ENCODE measurements at regions of chr20 and their contacts with region 1.

Region 1: GRCh38 chr20:5950271-5951031 is at the starts of genes MCM8 and TRMT6:
- DNase-seq: peak; percentile 98
- ATAC-seq: peak; percentile 87
- H3K4me3 Mint-ChIP-seq: peak within 1 kb of the TSS; percentile 95
- H3K27ac Mint-ChIP-seq: peak within 1 kb of the TSS; percentile 96
- H3K4me1 Mint-ChIP-seq: peaks cover 49% of the 10 kb centered on the region
- H3K27me3 Mint-ChIP-seq: no peaks in the 10 kb centered on the region
- total RNA-seq, gene MCM8: 42.5 to 45.4 TPM
- total RNA-seq, gene TRMT6: 20.9 to 27.3 TPM

Region 2: DNA sequence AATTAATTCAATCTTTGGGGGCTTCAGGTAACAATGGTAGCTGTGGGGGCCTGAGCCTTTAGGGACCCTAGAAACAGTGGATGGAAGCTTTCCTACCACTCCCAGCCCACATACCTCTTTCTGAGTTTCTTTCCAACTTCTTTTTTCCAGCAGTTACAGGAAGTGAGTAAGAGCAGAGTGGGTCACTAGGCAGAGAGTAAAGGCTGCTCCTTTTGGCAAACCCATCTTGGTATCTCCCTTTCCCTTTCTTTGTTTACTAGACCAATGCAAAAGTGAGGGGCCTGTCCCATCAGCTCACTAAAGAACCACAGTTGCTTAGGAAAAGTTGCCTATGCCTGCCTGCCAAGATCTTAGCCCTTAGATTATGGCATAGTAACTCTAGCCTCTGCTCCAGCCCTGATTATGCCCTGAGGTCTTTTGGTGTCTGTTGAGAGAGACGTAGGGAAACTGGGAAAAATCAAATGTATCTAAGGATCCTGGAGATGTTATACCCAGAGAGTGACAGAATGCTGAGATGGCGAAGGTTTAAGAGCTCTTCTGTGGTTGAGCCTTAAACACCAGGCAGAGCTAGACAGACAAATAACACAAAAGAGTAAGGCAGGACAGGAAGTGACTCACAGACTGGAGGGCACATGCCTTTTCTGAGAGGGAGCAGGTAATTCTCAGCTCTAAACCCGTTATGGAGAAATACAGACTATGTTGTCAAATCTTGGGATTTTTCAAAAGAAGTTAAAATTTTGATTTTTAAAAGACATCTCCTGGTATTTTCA is 31.4 kb before region 1 on chr20:
- CTCF ChIA-PET with region 1: interaction called, 4 read pairs
- POLR2A ChIA-PET with region 1: interaction called, 7 read pairs
- intact Hi-C with region 1: loop called in 1 of 2 experiments (anchors 1 kb)
- DNase-seq: peak; percentile 12
- ATAC-seq: peak; percentile 89
- H3K4me3 Mint-ChIP-seq: no peak overlapping the region
- H3K27ac Mint-ChIP-seq: peak overlapping the region; percentile 4
- H3K4me1 Mint-ChIP-seq: peaks cover 19% of the 10 kb centered on the region
- H3K27me3 Mint-ChIP-seq: peaks cover 8% of the 10 kb centered on the region

Region 3: GRCh38 chr20:6074145-6074561 is 123.7 kb after region 1 on chr20:
- CTCF ChIA-PET with region 1: no interaction called
- POLR2A ChIA-PET with region 1: no interaction called
- intact Hi-C with region 1: loop called in 1 of 2 experiments (anchors 2 kb)
- DNase-seq: peak; percentile 13
- ATAC-seq: peak; percentile 74
- H3K4me3 Mint-ChIP-seq: no peak overlapping the region
- H3K27ac Mint-ChIP-seq: no peak overlapping the region
- H3K4me1 Mint-ChIP-seq: no peaks in the 10 kb centered on the region
- H3K27me3 Mint-ChIP-seq: peaks cover 2% of the 10 kb centered on the region

Region 4: DNA sequence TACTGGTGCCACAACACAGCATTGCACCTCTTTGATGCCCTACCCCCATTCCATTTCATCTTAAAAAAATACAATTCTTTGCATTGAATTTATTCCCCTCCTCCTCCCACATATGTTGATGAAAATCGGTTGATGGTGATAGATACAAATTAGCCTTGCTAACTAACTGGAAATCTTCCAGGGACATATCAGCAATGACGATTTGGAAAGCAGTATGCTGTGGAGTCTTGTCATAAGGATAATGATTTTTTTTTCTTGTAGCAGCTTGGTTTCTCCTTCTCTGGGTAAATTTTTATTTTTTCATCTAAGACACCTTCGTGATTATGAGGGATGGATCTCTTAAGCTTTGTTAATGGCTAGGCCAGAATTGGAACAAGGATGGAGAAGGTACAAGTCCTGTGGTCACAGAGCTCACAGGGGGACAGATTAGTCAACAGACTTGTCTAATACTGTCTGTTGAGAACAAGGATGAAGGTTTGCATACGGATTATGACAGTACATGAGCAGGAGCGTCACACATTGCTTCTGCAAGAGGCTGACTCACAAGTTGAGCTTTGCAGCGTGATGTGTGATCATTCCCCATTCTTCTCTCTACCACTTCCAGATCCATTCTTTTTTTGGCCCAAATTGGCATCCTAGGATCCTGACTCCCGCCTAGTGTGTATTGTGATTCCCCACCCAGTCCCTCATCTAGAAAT is 405.5 kb after region 1 on chr20:
- CTCF ChIA-PET with region 1: no interaction called
- POLR2A ChIA-PET with region 1: no interaction called
- intact Hi-C with region 1: no loop called
- DNase-seq: no peak
- ATAC-seq: no peak
- H3K4me3 Mint-ChIP-seq: no peak overlapping the region
- H3K27ac Mint-ChIP-seq: no peak overlapping the region
- H3K4me1 Mint-ChIP-seq: no peaks in the 10 kb centered on the region
- H3K27me3 Mint-ChIP-seq: no peaks in the 10 kb centered on the region

Region 5: DNA sequence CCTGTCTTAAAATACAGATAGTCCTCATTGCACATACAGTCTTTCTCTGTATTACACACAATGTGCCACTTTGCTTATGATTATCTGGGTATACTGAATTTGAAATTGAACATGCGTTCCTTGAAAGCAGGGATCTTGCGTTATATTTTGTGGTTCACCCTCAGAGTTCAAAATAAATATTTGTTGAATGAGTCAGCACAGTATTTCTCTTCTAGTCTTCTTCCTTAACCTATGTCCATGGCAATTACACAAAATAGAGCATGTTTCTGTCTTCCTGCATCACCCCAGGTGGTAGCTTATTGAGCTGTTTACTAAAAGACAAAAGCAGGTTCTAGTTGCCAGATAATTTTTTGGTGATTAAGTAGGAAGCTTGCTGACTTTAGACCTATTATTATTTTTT is 445.2 kb after region 1 on chr20:
- CTCF ChIA-PET with region 1: no interaction called
- POLR2A ChIA-PET with region 1: no interaction called
- intact Hi-C with region 1: no loop called
- DNase-seq: no peak
- ATAC-seq: no peak
- H3K4me3 Mint-ChIP-seq: no peak overlapping the region
- H3K27ac Mint-ChIP-seq: no peak overlapping the region
- H3K4me1 Mint-ChIP-seq: no peaks in the 10 kb centered on the region
- H3K27me3 Mint-ChIP-seq: no peaks in the 10 kb centered on the region

Measured in activated CD4-positive, alpha-beta T cell treated with anti-CD3 and anti-CD28 coated beads for 36 hours (primary cell).